CD8-positive, alpha-beta memory T cell (primary cell): ENCODE measurements at regions of chr10 and their contacts with region 1.

Region 1: DNA sequence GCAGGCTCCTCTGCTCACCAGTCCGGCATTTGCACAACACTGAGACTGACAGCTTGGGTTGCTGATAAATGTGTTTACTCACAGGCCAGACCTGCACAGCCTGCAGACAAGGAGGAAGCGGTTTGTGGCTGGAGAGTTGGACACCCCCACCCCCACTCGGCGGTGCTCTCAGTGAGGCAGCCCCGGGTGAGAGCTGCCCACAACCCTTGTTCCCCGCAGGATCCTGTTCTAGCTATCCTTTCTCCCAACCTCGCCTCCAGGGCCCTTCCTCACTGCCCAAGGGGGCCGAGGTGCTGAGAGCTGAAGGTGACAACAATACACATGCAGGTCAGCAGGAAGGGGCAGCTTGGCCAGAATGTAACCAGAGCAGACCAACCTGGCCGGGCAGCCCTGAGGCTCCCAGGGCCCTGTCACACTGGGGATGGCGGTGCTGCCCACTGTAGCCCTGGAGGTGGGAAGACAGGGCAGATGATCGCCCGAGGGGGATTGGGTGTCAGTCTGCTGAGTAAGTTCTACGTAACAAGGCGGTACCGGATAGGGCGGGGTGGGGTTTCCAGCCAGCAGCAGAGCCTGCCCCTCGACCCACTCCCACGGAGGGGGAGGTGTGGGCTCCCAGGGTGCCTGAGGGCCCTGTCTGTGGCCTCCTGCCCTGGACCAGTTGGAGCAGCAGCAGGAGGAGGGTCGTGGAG is 2.1 kb upstream of the ADAM8 start:
- DNase-seq: peak in 4 of 5 donors; percentile 58 to 87 (median 76)
- H3K4me3 ChIP-seq: peak overlapping the region; percentile 11
- H3K4me3 Mint-ChIP-seq: peak overlapping the region; percentile 84 to 98 (median 89)
- H3K27ac ChIP-seq: peak overlapping the region; percentile 96
- H3K27ac Mint-ChIP-seq: peak overlapping the region; percentile 94 to 100 (median 98)
- H3K4me1 ChIP-seq: peaks cover 45% of the 10 kb centered on the region
- H3K4me1 Mint-ChIP-seq: peaks cover 23 to 54% (median 35%) of the 10 kb centered on the region in 3 donors
- H3K27me3 ChIP-seq: no peaks in the 10 kb centered on the region
- H3K27me3 Mint-ChIP-seq: no peaks in the 10 kb centered on the region

Region 2: GRCh38 chr10:133009222-133009954 is 269.3 kb before region 1 on chr10:
- CTCF ChIA-PET with region 1: no interaction called
- POLR2A ChIA-PET with region 1: no interaction called
- DNase-seq: no peak
- H3K4me3 ChIP-seq: no peak overlapping the region
- H3K4me3 Mint-ChIP-seq: no peak overlapping the region
- H3K27ac ChIP-seq: no peak overlapping the region
- H3K27ac Mint-ChIP-seq: no peak overlapping the region
- H3K4me1 ChIP-seq: no peaks in the 10 kb centered on the region
- H3K4me1 Mint-ChIP-seq: no peaks in the 10 kb centered on the region
- H3K27me3 ChIP-seq: no peaks in the 10 kb centered on the region
- H3K27me3 Mint-ChIP-seq: peaks cover 0 to 3% of the 10 kb centered on the region in 2 donors

Region 3: DNA sequence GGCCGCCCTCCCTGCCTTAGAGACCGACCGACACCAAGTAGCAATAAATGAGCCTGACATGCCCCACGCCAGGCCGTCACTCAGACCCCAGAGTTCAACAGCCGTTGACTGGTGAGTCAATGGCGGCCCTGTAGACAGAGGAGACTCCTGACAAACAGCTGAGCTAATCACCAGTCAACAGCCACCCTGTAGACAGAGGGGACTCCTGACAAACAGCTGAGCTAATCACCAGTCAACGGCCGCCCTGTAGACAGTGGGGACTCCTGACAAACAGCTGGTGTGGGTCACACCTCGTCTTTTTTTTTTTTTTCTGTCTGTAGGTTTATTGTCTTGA is 135.6 kb before region 1 on chr10:
- CTCF ChIA-PET with region 1: interaction called, 10 read pairs
- POLR2A ChIA-PET with region 1: no interaction called
- DNase-seq: no peak
- H3K4me3 ChIP-seq: no peak overlapping the region
- H3K4me3 Mint-ChIP-seq: no peak overlapping the region
- H3K27ac ChIP-seq: no peak overlapping the region
- H3K27ac Mint-ChIP-seq: no peak overlapping the region
- H3K4me1 ChIP-seq: no peaks in the 10 kb centered on the region
- H3K4me1 Mint-ChIP-seq: peaks cover 0 to 11% (median 4%) of the 10 kb centered on the region in 3 donors
- H3K27me3 ChIP-seq: peaks cover 4% of the 10 kb centered on the region
- H3K27me3 Mint-ChIP-seq: peaks cover 19 to 48% of the 10 kb centered on the region in 2 donors

Region 4: DNA sequence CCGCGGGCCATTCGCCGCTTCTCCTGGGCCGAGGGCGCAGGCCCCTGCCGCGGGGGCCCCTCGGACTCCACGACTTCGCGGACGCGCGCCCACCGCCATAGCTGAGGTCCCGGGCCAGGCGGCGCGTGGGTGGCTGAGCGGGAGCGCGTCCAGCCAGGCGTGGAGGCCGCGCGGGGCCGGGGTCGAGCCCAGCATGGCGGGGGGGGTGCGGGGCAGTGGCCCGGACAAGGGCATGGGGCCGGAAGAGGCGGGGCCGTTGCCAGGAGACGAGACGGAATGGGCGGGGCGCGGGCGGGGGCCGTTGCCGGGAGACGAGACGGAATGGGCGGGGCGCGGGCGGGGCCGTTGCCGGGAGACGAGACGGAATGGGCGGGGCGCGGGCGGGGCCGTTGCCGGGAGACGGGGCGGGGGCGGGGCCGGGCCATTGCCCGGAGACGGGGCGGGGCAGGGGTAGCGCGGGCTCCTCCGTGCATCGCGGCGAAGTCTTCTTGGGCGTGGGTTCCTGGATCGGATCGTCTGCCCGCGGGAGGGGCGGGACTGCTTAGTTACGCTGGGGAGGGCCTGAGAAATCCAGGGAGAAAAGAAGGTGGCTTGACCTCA is 16.9 kb before region 1 on chr10:
- CTCF ChIA-PET with region 1: interaction called, 13 read pairs
- POLR2A ChIA-PET with region 1: interaction called, 15 read pairs
- DNase-seq: peak; percentile 75 to 91 (median 82)
- H3K4me3 ChIP-seq: peak overlapping the region; percentile 45
- H3K4me3 Mint-ChIP-seq: peak overlapping the region; percentile 73 to 92 (median 79)
- H3K27ac ChIP-seq: peak overlapping the region; percentile 69
- H3K27ac Mint-ChIP-seq: peak overlapping the region; percentile 76 to 99 (median 91)
- H3K4me1 ChIP-seq: peaks cover 78% of the 10 kb centered on the region
- H3K4me1 Mint-ChIP-seq: peaks cover 57 to 84% (median 76%) of the 10 kb centered on the region in 3 donors
- H3K27me3 ChIP-seq: no peaks in the 10 kb centered on the region
- H3K27me3 Mint-ChIP-seq: peaks cover 0 to 2% of the 10 kb centered on the region in 2 donors

Region 5: DNA sequence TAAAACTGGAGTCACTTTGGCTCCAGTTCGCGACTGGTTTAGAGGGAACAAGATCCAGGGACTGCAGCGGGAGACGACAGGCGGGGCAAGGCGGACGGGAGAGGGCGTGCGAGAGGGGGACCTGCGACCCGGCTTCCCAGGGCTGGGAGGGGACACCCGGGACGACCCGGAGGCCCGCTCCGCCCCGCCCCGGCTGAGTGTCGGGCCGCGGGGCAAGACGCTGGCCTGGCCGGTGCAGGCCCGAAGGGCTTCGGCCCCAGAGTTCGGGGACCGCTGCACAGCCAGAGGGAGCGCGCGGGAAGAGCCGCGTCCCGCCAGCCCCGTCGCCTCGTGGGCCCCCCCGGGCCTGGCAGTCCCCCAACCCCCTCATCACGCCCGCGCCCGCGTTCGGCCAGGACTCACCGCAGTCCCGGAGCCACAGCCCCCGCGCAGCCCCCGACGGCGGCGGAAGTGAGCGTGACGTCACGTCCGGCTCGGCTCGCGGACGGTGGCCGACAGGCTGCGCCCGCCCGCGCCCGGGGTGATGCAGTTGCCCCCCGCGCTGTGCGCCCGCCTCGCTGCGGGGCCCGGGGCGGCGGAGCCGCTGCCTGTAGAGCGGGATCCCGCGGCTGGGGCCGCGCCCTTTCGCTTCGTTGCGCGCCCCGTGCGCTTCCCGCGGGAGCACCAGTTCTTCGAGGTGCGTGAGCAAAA is 29.8 kb after region 1 on chr10 and contains the starts of genes TUBGCP2 and ZNF511:
- CTCF ChIA-PET with region 1: interaction called, 28 read pairs
- POLR2A ChIA-PET with region 1: interaction called, 6 read pairs
- DNase-seq: peak; percentile 85 to 95 (median 94)
- H3K4me3 ChIP-seq: peak within 1 kb of the TSS; percentile 88
- H3K4me3 Mint-ChIP-seq: peak within 1 kb of the TSS; percentile 94 to 99 (median 99)
- H3K27ac ChIP-seq: peak within 1 kb of the TSS; percentile 99
- H3K27ac Mint-ChIP-seq: peak within 1 kb of the TSS; percentile 98 to 100 (median 100)
- H3K4me1 ChIP-seq: peaks cover 18% of the 10 kb centered on the region
- H3K4me1 Mint-ChIP-seq: peaks cover 30 to 41% (median 30%) of the 10 kb centered on the region in 3 donors
- H3K27me3 ChIP-seq: no peaks in the 10 kb centered on the region
- H3K27me3 Mint-ChIP-seq: peaks cover 0 to 7% of the 10 kb centered on the region in 2 donors
- total RNA-seq, gene TUBGCP2: 67.9 to 68.1 TPM
- total RNA-seq, gene ZNF511: 82.2 to 83.2 TPM